CD8-positive, alpha-beta T cell (primary cell): ENCODE measurements at regions of chr2 and their contacts with region 1.

Region 1: DNA sequence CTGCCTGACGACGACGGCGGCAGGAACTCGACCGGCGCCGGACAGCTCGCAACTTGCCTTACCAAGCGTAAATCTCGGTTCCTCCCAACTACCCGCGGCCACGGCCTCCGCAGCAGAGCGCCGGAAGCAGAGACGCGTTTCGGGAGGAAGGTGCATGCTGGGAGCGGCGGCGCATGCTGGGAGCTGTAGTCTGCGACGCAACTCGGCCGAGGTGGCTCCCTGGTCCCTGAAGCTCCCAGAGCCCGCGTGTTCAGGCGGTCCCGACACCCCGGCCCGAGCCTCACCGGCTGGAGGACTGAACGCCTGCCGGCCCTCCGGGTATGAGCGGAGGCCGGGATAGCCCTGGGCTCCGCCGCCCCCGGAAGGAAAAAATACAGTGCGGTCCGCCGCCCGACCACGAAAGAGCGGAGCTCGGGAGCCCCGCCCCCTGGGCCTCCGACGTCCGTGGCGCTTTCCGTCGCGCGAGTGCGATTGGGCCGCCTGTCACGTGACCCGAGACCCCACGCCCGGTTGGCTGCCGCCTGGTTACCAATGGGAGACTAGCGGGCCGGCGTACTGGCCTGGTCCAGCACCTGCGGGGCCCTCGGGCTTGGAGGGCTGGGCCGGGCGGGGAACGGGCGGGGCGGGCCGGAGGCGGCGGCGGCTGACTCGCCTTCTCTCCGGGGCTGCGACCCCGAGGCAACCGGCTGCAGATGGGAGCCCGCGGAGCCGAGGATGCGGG is at the start of gene CAPN10:
- DNase-seq: peak; percentile 92 to 98 (median 97)
- ATAC-seq: peak; percentile 80
- H3K4me3 ChIP-seq: peak within 1 kb of the TSS; percentile 82 to 95
- H3K4me3 Mint-ChIP-seq: peak within 1 kb of the TSS; percentile 88
- H3K27ac ChIP-seq: peak within 1 kb of the TSS; percentile 86 to 90
- H3K27ac Mint-ChIP-seq: peak within 1 kb of the TSS; percentile 94
- H3K4me1 ChIP-seq: peaks cover 37% of the 10 kb centered on the region
- H3K4me1 Mint-ChIP-seq: peaks cover 57% of the 10 kb centered on the region
- H3K27me3 ChIP-seq: no peaks in the 10 kb centered on the region
- H3K27me3 Mint-ChIP-seq: no peaks in the 10 kb centered on the region
- CTCF ChIP-seq: no peak
- total RNA-seq, gene CAPN10: 65.9 to 68.9 TPM

Region 2: GRCh38 chr2:239724194-239724849 is 862.0 kb before region 1 on chr2:
- CTCF ChIA-PET with region 1: no interaction called
- POLR2A ChIA-PET with region 1: no interaction called
- intact Hi-C with region 1: no loop called
- DNase-seq: no peak
- ATAC-seq: no peak
- H3K4me3 ChIP-seq: no peak overlapping the region
- H3K4me3 Mint-ChIP-seq: no peak overlapping the region
- H3K27ac ChIP-seq: no peak overlapping the region
- H3K27ac Mint-ChIP-seq: no peak overlapping the region
- H3K4me1 ChIP-seq: no peaks in the 10 kb centered on the region
- H3K4me1 Mint-ChIP-seq: no peaks in the 10 kb centered on the region
- H3K27me3 ChIP-seq: no peaks in the 10 kb centered on the region
- H3K27me3 Mint-ChIP-seq: no peaks in the 10 kb centered on the region
- CTCF ChIP-seq: no peak

Region 3: DNA sequence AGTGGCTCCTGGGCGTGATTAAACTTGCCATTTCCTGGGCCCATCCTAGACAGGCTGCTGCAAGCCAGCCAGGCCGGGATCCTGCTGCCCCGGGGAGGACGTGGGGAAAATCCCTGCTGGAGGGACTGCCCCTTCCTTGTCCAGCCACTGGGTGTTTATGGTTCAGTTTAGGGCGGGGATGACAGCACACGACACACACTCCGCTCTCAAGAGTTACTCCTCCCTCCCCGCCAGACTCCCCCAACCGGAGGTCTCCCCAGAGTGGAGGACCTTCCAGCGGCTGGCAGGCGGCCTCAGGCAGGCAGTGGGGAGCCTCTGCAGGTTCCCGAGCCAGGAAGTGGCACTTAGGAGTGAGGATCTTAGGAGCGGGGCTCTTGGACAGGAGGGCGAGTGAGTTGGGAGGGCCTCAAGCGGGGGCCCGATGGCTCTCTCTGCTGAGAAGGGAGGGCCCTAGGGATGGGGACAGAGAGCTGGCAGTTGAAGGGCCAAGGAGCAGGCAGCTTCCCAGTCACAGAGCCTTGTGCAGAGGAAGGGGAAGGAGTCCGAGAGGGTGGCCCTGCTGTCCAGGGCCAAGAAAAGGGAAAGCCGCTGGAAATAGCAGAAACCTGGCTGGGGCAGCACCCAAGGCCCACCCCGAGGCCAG is 33.3 kb after region 1 on chr2:
- CTCF ChIA-PET with region 1: interaction called, 9 read pairs
- POLR2A ChIA-PET with region 1: interaction called, 26 read pairs
- intact Hi-C with region 1: loop called (anchors 2 kb)
- DNase-seq: no peak
- ATAC-seq: no peak
- H3K4me3 ChIP-seq: no peak overlapping the region
- H3K4me3 Mint-ChIP-seq: no peak overlapping the region
- H3K27ac ChIP-seq: peak overlapping the region in 1 of 2 experiments; percentile 73
- H3K27ac Mint-ChIP-seq: peak overlapping the region; percentile 78
- H3K4me1 ChIP-seq: peaks cover 45% of the 10 kb centered on the region
- H3K4me1 Mint-ChIP-seq: peaks cover 38% of the 10 kb centered on the region
- H3K27me3 ChIP-seq: no peaks in the 10 kb centered on the region
- H3K27me3 Mint-ChIP-seq: no peaks in the 10 kb centered on the region
- CTCF ChIP-seq: no peak

Region 4: GRCh38 chr2:240624950-240625621 is 38.7 kb after region 1 on chr2 and contains the start of gene GPR35:
- CTCF ChIA-PET with region 1: interaction called, 9 read pairs
- POLR2A ChIA-PET with region 1: interaction called, 26 read pairs
- intact Hi-C with region 1: loop called (anchors 2 kb)
- DNase-seq: peak; percentile 46 to 97 (median 75)
- ATAC-seq: peak; percentile 70
- H3K4me3 ChIP-seq: peak within 1 kb of the TSS; percentile 15 to 43
- H3K4me3 Mint-ChIP-seq: peak within 1 kb of the TSS; percentile 62
- H3K27ac ChIP-seq: peak within 1 kb of the TSS; percentile 40 to 74
- H3K27ac Mint-ChIP-seq: peak within 1 kb of the TSS; percentile 91
- H3K4me1 ChIP-seq: peaks cover 70% of the 10 kb centered on the region
- H3K4me1 Mint-ChIP-seq: peaks cover 53% of the 10 kb centered on the region
- H3K27me3 ChIP-seq: no peaks in the 10 kb centered on the region
- H3K27me3 Mint-ChIP-seq: no peaks in the 10 kb centered on the region
- CTCF ChIP-seq: no peak
- total RNA-seq, gene GPR35: 17.5 to 18.7 TPM